Activated naive CD4-positive, alpha-beta T cell treated with anti-CD3 and anti-CD28 coated beads for 36 hours (primary cell): ENCODE measurements at regions of chr1 and their contacts with region 1.

Region 1: GRCh38 chr1:25608488-25609178 is 8.0 kb upstream of the MAN1C1 start:
- DNase-seq: peak; percentile 96
- H3K4me3 Mint-ChIP-seq: no peak overlapping the region
- H3K27ac Mint-ChIP-seq: no peak overlapping the region
- H3K4me1 Mint-ChIP-seq: peaks cover 11% of the 10 kb centered on the region
- H3K27me3 Mint-ChIP-seq: no peaks in the 10 kb centered on the region

Region 2: DNA sequence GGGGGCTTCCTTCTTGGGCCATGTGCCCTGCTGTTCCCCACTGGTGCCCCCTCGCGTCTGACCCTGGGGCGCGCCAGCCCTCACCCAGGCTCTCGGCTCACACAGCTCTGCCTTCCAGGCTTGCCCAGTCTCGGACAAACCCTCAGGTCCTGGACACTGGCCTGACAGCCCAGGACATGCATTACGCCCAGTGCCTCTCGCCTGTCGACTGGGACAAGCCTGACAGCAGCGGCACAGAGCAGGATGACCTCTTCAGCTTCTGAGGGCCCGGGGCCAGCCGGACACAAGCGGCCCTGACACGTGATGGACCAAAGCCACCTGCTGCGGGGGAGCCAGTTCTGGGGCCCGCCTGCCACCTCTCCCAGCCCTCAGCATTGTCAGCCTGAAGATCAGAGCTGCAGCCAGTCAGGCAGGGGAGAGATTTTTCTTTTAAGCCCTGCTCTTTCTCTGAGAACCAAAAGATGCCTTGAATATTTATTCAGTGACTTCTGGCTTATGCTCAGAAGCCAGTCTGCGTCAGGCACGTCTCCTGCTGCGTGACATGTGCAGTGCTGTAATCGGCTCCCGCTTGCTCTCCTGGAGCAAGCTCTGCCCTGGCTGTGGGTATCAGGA is 41.8 kb before region 1 on chr1:
- CTCF ChIA-PET with region 1: interaction called, 10 read pairs
- intact Hi-C with region 1: no loop called
- DNase-seq: peak; percentile 54
- H3K4me3 Mint-ChIP-seq: no peak overlapping the region
- H3K27ac Mint-ChIP-seq: peak overlapping the region; percentile 83
- H3K4me1 Mint-ChIP-seq: peaks cover 81% of the 10 kb centered on the region
- H3K27me3 Mint-ChIP-seq: no peaks in the 10 kb centered on the region

Region 3: DNA sequence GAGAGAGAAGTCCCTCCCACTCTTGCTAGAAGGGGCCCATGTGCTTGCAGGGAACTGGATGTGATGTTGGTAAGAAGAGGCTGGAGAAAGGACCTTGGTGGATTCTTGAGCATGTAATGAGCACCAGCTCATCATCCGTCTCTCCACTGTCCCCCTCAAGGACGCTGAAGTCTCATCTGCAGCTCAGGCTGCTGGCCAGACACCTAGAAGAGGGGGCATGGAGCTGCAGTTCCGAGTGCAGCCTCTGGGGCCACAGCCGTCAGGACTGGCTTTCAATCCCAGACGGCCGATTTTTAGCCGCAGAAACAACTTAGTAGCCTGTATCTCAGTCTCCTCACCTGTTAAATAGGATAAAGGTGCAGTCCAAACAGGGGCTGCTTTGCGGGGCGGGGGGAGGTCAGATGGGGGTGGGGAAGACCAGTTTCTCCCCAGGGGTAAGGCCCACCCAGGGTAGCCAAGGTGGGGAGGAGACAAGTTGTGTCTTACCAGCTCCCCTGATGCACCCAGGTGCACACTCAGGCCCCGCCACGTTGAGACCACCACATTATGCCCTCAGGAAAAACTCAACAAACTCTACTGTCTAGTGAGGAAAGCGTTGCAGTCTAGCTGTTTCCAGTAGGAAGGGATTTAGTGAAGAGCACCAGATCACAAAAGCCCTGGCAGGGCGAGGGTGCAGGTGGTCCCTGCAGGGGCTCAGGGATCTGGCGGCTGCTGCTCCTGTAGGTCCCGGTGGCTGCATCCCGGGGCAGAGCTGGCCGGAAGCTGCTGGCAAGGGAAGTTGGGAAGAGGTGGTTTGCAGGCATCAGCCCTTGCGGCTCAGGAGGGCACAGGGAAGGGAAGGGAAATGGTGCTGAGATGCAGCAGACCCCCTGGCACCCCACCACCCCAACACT is 35.7 kb before region 1 on chr1:
- CTCF ChIA-PET with region 1: interaction called, 10 read pairs
- intact Hi-C with region 1: no loop called
- DNase-seq: peak; percentile 65
- H3K4me3 Mint-ChIP-seq: no peak overlapping the region
- H3K27ac Mint-ChIP-seq: no peak overlapping the region
- H3K4me1 Mint-ChIP-seq: peaks cover 42% of the 10 kb centered on the region
- H3K27me3 Mint-ChIP-seq: no peaks in the 10 kb centered on the region

Region 4: DNA sequence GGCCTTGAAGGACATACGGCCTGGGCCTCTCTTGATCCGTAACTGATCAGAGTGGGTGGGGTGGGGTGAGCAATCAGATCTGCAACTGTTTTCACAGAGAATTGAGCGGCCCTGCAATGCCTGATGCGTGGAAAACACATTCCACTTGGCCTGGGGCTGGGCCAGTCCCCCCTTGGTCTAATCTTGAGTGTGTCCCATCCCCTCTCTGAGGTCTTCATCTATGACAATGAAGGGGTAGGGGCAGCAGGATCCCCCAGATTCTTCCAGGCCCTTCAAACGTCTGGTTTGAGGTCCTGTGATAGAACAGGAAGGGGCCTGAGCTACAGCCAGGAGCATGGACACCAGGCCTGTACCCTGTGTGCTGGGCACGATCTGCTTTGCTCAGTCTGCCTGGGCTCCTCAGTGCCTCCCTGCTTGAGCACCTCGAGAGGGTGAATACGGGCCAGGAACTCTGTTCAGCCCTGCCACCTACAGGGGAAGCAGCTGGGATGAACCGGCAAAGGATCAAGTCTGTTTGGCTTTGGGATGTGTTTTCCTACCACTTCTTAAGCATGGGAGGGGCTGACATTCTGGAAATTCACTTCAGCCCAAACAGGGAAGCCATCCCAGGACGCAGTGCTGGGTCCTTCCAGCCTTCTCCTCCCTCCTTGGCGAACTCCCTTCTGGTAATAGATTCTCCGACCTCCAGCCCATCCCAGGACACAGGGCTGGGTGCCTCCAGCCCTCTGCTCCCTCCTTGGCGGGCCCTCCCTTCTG is 135.4 kb after region 1 on chr1:
- CTCF ChIA-PET with region 1: interaction called, 7 read pairs
- intact Hi-C with region 1: loop called (anchors 1 kb)
- DNase-seq: peak; percentile 32
- H3K4me3 Mint-ChIP-seq: no peak overlapping the region
- H3K27ac Mint-ChIP-seq: no peak overlapping the region
- H3K4me1 Mint-ChIP-seq: peaks cover 24% of the 10 kb centered on the region
- H3K27me3 Mint-ChIP-seq: no peaks in the 10 kb centered on the region

Region 5: GRCh38 chr1:25810341-25811299 is 202.0 kb after region 1 on chr1:
- CTCF ChIA-PET with region 1: interaction called, 33 read pairs
- intact Hi-C with region 1: no loop called
- DNase-seq: peak; percentile 87
- H3K4me3 Mint-ChIP-seq: no peak overlapping the region
- H3K27ac Mint-ChIP-seq: no peak overlapping the region
- H3K4me1 Mint-ChIP-seq: peaks cover 5% of the 10 kb centered on the region
- H3K27me3 Mint-ChIP-seq: no peaks in the 10 kb centered on the region